Motor neuron (in vitro differentiated cells): ENCODE measurements at regions of chr3 and their contacts with region 1.

Region 1: GRCh38 chr3:124761250-124761796 is 31.1 kb downstream of the UMPS start:
- ATAC-seq: peak; percentile 77 to 89 (median 82)
- H3K4me3 ChIP-seq: no peak overlapping the region
- H3K27ac ChIP-seq: no peak overlapping the region
- H3K4me1 ChIP-seq: peaks cover 0 to 2% of the 10 kb centered on the region in 2 donors

Region 2: DNA sequence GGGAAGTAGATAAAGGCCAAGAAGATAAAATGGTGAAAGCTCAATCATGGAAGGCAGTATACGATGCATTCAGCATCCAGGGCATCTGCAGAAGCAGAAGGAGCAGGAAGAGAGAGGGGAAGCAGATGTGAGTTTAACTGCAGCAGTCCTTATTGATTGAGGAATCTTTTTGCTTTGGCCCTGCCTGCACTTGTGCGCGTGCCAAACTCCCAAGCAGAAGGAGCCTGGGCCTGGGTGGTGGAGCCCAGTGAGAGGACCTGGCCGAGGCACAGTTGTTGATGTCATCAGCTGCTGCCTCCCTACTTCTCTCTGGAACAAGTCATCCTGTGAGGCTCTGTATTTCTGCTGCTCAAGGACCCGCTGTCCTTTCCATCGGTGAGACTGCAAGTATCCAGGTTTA is 703.9 kb before region 1 on chr3:
- in situ Hi-C with region 1: no loop called
- ATAC-seq: peak in 4 of 8 experiments; percentile 33 to 81 (median 57)
- H3K4me3 ChIP-seq: no peak overlapping the region
- H3K27ac ChIP-seq: no peak overlapping the region
- H3K4me1 ChIP-seq: peaks cover 33 to 34% of the 10 kb centered on the region in 2 donors

Region 3: GRCh38 chr3:124905849-124906248 is 144.5 kb after region 1 on chr3:
- in situ Hi-C with region 1: loop called in 4 of 9 experiments (anchors 10 kb)
- ATAC-seq: no peak
- H3K4me3 ChIP-seq: no peak overlapping the region
- H3K27ac ChIP-seq: no peak overlapping the region
- H3K4me1 ChIP-seq: no peaks in the 10 kb centered on the region